ENCODE measurements at regions of chr3 and their contacts with region 1.

Region 1: GRCh38 chr3:158790901-158791589 is 10.8 kb upstream of the MFSD1 start:
- DNase-seq: no peak
- H3K4me3 ChIP-seq: no peak overlapping the region
- H3K27ac ChIP-seq: no peak overlapping the region
- H3K4me1 ChIP-seq: peaks cover 0 to 11% (median 4%) of the 10 kb centered on the region in 4 donors
- H3K27me3 ChIP-seq: no peaks in the 10 kb centered on the region
- CTCF ChIP-seq: peak; percentile 74 to 88 (median 82)
- EP300 ChIP-seq: no peak
- POLR2A ChIP-seq: no peak

Region 2: GRCh38 chr3:158539414-158540014 is 251.5 kb before region 1 on chr3:
- in situ Hi-C with region 1: loop called in 3 of 4 experiments (anchors 10 to 25 kb)
- intact Hi-C with region 1: no loop called
- DNase-seq: peak; percentile 24
- H3K4me3 ChIP-seq: no peak overlapping the region
- H3K27ac ChIP-seq: no peak overlapping the region
- H3K4me1 ChIP-seq: no peaks in the 10 kb centered on the region
- H3K27me3 ChIP-seq: no peaks in the 10 kb centered on the region
- CTCF ChIP-seq: peak; percentile 27 to 54 (median 44)
- EP300 ChIP-seq: no peak
- POLR2A ChIP-seq: no peak

Region 3: GRCh38 chr3:158659454-158660237 is 131.4 kb before region 1 on chr3:
- in situ Hi-C with region 1: loop called (anchors 5 to 10 kb)
- intact Hi-C with region 1: loop called (anchors 5 kb)
- DNase-seq: peak; percentile 63
- H3K4me3 ChIP-seq: no peak overlapping the region
- H3K27ac ChIP-seq: peak overlapping the region in 1 of 4 donors; percentile 25
- H3K4me1 ChIP-seq: peaks cover 0 to 18% (median 3%) of the 10 kb centered on the region in 4 donors
- H3K27me3 ChIP-seq: no peaks in the 10 kb centered on the region
- CTCF ChIP-seq: peak; percentile 58 to 74 (median 68)
- EP300 ChIP-seq: no peak
- POLR2A ChIP-seq: no peak

Region 4: DNA sequence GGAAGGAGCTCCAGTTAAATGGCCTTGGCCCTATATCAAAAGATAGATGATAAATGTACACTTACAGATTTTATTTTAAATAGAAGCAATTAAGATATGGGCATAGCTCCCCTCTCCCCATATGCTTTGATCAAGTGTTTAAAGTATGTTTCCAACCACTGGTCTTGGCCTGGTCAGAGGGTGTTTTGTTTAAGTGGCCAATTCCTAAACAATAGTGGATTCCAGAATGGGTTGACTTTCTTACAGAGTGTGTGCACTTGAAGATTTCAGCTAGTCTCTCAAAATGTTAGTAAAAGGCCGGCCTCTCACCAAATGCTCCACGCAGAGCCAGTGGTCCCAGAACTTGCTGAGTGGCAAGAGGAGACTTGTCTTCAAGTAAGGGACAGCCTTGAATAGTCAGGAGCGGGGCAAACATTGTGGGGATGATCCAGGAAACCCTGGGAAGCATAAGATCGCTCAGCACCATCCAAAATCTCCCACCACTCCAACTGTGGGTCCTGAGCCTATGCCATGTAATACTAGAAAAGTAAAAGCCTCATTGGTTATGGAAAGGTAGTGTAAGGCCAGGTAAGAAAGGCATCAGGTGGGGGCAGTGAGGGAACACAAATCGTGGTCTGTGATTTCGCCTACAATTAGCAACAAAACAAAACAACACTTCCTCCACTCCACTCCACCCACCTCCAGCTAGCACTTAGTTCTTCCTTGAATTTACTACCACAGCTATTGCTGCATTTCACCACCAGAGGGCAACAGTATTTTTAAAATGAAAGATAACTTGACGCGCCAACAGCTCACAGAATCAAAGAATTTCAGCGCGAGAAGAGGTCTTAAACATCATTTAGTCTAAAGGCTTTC is 63.6 kb before region 1 on chr3:
- in situ Hi-C with region 1: loop called (anchors 5 to 10 kb)
- intact Hi-C with region 1: loop called (anchors 2 kb)
- DNase-seq: peak; percentile 64
- H3K4me3 ChIP-seq: peak overlapping the region in 1 of 4 donors; percentile 22
- H3K27ac ChIP-seq: peak overlapping the region; percentile 82 to 90 (median 88)
- H3K4me1 ChIP-seq: peaks cover 52 to 72% (median 61%) of the 10 kb centered on the region in 4 donors
- H3K27me3 ChIP-seq: no peaks in the 10 kb centered on the region
- CTCF ChIP-seq: peak; percentile 86 to 95 (median 90)
- EP300 ChIP-seq: no peak
- POLR2A ChIP-seq: no peak

Measured in transverse colon (tissue), 4 donors.